ENCODE measurements at regions of chr2 and their contacts with region 1.

Region 1: GRCh38 chr2:10122386-10123280 is at the start of gene RRM2:
- DNase-seq: peak; percentile 97
- total RNA-seq, gene RRM2: 0.67 to 1.5 TPM

Region 2: GRCh38 chr2:10064932-10065772 is 57.5 kb before region 1 on chr2:
- intact Hi-C with region 1: no loop called
- DNase-seq: peak; percentile 74

Region 3: DNA sequence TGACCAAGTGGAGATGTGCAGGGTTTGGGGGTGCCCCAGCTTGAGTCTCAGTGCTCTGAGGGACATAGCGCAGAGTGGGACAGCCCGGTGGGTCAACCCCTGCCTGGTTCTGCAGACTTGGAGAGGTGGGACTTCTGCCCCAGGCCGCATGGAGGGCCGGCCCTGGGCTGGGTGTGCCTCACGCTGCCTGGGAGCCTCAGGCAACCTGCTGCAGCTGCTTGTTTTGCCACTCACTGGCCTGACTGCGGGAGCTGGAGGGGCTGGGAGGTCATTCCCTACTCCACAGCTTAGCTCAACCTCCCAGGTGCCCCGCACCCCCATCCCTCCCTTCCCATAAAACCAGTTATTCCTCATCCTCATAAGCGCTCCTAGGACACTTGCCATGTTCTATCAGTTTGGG is 292.4 kb after region 1 on chr2:
- intact Hi-C with region 1: loop called in 1 of 2 experiments (anchors 5 kb)
- DNase-seq: no peak

Region 4: DNA sequence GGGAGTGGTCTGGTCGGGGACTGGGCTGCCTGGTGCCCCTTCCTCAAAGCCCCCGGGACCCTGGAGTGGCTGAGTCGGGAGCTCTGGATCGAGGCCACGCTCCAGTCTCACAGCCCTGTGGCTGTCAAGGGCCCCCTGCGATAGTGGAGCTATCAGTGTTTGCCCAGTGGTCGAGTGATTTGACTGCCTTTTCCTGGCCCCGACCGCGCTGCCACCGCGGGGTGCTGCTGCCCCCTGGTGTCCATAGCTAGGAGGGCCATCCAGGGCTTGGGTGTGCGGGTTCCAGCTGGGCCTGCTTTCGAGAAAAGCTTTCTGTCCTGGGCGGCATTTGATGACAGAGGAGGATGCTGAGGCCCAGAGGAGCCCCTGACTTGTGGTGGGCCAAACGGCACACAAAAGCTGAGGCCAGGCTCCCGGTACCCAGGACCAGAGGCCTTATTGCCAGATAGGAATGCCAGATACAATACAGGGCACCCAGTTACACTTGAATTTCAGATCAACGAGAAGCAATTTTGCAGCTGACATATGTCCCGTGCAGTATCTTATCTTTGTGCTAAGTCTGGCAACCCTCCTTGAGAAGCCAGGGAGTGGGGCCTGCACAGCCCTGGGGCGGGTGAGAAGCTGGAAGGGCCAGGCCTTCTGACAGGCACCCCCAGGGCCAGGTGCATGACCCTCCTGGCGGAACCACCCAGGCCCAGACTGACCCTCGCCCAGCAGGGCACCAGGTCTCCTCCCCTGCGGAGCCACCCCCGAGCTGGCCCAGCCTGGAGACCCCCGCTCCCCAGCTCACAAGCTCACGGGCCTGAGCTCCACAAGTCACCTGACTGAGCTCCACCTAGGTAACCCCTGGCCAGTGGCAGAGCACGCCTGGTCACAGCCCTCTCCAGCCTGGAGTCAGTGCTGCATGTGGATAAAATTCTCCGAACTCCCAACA is 312.5 kb after region 1 on chr2:
- intact Hi-C with region 1: loop called (anchors 2 to 5 kb)
- DNase-seq: peak; percentile 93

Measured in posterior vena cava (tissue), 2 donors.